IMR-90 (cell line): ENCODE measurements at regions of chr10 and their contacts with region 1.

Region 1: DNA sequence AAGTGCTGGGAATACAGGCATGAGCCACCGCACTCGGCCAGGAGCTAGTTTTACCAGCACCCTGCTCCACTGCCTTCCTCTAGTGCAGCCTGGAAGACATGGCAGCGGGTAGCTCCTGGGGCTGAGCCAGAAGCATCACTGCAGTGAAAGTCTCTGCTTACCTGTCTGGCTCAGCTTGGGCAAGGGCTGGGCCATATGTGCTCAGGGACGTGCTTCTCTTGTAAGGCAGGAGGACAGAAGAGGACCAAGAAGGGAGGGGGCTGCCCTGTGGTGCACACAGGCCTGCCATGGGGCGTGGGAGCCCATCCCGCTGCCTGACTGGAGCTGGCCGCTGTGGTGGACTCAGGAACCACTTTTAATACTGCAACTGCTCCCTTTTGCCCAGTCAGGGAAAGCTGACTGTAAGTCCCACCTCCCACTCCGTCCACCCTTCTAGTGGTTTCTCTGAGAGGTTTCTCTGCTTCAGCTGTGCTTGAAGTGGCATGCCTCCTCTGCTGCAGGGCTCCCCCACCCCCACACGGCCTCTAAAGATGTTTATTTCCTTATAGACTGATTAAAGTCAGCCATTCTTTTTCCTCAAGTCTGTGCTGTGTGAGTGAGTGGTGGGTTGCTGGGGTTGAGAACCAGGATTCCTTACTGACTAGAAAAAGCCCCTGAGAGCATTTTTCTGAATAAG is 25.3 kb upstream of the C10orf95 start:
- DNase-seq: no peak
- ATAC-seq: no peak; the same call in 1 of the 2 replicates
- H3K4me3 ChIP-seq: no peak overlapping the region
- H3K27ac ChIP-seq: no peak overlapping the region
- H3K4me1 ChIP-seq: no peaks in the 10 kb centered on the region
- H3K27me3 ChIP-seq: no peaks in the 10 kb centered on the region
- CTCF ChIP-seq: no peak
- POLR2A ChIP-seq: no peak
- RAD21 ChIP-seq: no peak

Region 2: GRCh38 chr10:102231357-102232318 is 245.0 kb before region 1 on chr10:
- CTCF ChIA-PET with region 1: no interaction called
- POLR2A ChIA-PET with region 1: no interaction called
- dilution Hi-C with region 1: no loop called
- in situ Hi-C with region 1: loop called (anchors 10 kb)
- intact Hi-C with region 1: loop called (anchors 1 kb)
- DNase-seq: no peak
- ATAC-seq: 0 out of 2 replicates have a peak, but pooled peaks have one; percentile 18
- H3K4me3 ChIP-seq: no peak overlapping the region; the same call in 1 of the 2 replicates
- H3K27ac ChIP-seq: no peak overlapping the region
- H3K4me1 ChIP-seq: peaks cover 4% of the 10 kb centered on the region
- H3K27me3 ChIP-seq: peaks cover 44% of the 10 kb centered on the region; the same call in 1 of the 2 replicates
- CTCF ChIP-seq: peak; percentile 62
- POLR2A ChIP-seq: no peak
- RAD21 ChIP-seq: peak; percentile 61

Region 3: DNA sequence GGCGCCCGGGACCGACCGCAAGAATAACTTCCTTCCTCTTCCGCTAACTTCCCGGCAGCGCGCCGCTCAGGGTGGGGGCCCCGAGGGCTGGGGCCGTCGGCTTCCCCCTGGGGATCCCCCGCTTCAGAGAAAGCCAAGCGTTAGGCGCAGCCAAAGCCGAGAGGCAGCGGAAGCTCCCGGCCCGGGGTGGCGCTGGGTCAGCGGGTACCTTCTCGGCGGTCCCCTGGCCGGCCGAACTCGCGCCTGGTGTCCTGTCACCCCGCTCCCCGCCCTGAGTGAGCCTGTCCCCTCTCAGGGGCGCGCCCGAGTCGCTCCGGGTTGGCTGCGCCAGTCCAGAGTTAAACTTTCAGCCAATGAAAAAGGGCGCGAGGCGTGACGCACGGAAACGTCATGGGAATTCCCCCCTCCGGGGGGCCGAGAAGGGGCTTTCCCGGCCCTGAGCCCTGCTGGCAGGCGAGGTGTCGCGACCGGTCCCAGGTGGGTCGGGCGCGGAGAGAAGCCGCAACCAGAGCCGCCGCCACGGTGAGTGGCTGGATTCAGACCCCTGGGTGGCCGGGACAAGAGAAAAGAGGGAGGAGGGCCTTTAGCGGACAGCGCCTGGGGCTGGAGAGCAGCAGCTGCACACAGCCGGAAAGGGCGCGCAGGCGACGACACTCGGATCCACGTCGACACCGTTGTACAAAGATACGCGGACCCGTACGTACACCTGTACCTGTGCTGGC is 82.4 kb before region 1 on chr10:
- CTCF ChIA-PET with region 1: interaction called, 3 read pairs
- POLR2A ChIA-PET with region 1: no interaction called
- dilution Hi-C with region 1: no loop called
- in situ Hi-C with region 1: loop called (anchors 5 kb)
- intact Hi-C with region 1: loop called (anchors 1 kb)
- DNase-seq: peak; percentile 95
- ATAC-seq: peak; percentile 89
- H3K4me3 ChIP-seq: peak overlapping the region; percentile 51
- H3K27ac ChIP-seq: peak overlapping the region; percentile 55
- H3K4me1 ChIP-seq: peaks cover 7% of the 10 kb centered on the region
- H3K27me3 ChIP-seq: no peaks in the 10 kb centered on the region
- CTCF ChIP-seq: no peak; the same call in 1 of the 2 replicates
- POLR2A ChIP-seq: peak; percentile 93
- RAD21 ChIP-seq: no peak

Region 4: DNA sequence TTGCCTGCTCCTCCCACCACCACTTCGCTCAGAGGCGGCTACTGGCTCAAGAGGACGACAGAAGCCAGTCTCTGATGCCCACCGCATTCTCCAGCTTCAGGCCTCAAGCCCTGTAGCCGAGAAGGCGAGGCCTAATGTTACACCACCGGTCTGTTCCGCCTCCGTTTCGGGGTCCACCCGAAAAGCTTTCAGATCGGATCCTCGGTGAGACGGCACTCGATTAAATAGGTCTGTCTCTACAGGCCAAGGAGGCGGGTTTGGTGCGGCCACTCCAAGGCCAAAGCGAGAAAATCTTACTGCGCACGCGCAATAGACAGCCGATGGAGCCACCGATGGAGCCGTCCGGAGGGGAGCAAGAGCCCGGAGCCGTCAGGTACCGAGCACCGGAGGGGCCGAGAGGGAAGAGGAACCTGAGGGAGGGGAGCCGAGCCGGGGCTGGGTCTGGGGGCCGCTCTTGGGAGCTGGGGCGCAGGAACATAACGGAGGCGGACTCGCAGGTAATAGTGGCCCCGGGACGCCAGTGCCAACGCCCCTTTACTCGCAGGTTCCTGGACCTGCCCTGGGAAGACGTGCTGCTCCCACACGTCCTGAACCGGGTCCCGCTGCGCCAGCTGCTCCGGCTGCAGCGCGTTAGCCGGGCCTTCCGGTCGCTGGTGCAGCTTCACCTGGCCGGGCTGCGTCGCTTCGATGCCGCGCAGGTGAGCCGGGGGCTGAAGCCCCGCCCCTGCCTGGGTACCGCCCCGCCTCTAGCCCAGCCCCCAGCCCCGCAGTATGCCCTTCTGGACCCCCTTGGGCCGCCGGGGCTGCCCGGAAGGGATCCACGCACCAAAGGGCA is 55.6 kb before region 1 on chr10 and contains the start of gene FBXL15:
- CTCF ChIA-PET with region 1: no interaction called
- POLR2A ChIA-PET with region 1: no interaction called
- dilution Hi-C with region 1: no loop called
- in situ Hi-C with region 1: no loop called
- intact Hi-C with region 1: loop called (anchors 1 kb)
- DNase-seq: peak; percentile 95
- ATAC-seq: peak; percentile 91
- H3K4me3 ChIP-seq: peak within 1 kb of the TSS; percentile 55
- H3K27ac ChIP-seq: peak within 1 kb of the TSS; percentile 77
- H3K4me1 ChIP-seq: peaks cover 9% of the 10 kb centered on the region
- H3K27me3 ChIP-seq: peaks cover 13% of the 10 kb centered on the region; the same call in 1 of the 2 replicates
- CTCF ChIP-seq: no peak
- POLR2A ChIP-seq: 0 out of 2 replicates have a peak, but pooled peaks have one; percentile 23
- RAD21 ChIP-seq: no peak
- total RNA-seq, gene FBXL15: 2.5 and 3.0 TPM in 2 replicates